HepG2 (cell line): ENCODE measurements at regions of chr1 and their contacts with region 1.

Region 1: DNA sequence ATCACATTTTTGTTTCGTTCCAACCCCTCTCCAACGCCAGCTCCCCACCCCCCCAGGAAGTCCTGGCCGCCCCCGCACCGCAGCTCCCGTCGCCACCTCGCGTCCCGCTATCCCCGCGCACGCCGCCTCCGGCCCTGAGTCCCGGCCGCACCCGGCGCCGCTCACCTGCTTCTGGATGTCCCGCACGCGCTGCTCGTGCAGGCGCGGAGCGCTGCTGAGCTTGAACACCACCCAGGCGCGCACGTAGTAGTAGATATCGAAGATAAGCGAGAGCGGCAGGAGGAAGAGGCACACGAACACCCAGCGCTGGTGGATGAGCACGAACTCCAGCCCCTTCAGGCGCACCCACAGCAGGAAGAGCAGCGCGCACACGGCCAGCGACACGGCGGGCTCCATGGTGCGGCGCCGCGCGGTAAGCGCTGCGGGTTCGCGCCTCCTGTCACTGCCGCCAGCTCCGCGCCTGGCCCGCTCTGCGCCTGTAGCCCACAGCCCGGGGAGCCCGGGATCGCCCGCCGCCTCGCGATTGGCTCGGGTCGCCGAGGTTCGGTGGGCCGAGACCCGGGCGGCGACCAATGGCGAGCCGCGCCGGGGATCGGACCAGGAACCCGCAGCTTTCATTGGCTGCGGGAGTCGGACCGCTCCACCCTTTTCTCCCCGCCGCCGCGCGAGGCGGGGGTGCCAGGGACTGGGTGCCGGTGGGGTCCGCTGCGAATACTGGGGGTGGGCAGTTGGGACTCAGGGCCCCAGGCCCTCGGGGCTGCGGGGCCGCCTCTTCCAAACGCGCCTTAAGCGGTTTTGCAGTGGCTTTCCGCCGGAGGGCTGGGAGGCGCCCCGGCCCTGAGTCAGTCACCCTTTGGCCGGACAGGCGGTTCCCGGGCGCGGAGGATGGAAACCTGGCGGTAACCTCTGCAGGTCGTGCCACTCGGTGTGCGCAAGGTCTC is at the start of gene DHCR24:
- DNase-seq: peak; percentile 77
- ATAC-seq: peak; percentile 81
- H3K4me3 ChIP-seq: peak within 1 kb of the TSS; percentile 93 to 99 (median 98)
- H3K27ac ChIP-seq: peak within 1 kb of the TSS; percentile 99
- H3K4me1 ChIP-seq: peaks cover 73% of the 10 kb centered on the region
- H3K27me3 ChIP-seq: no peaks in the 10 kb centered on the region; a peak in 1 of 5 replicates
- CTCF ChIP-seq: no peak
- EP300 ChIP-seq: peak; percentile 38 to 65; a peak in 1 of 4 replicates
- POLR2A ChIP-seq: peak; percentile 94 to 99
- RAD21 ChIP-seq: peak; percentile 17
- total RNA-seq, gene DHCR24: 250 and 448 TPM in 2 replicates

Region 2: GRCh38 chr1:54715493-54716298 is 171.3 kb before region 1 on chr1 and contains the start of gene TTC4:
- CTCF ChIA-PET with region 1: no interaction called
- POLR2A ChIA-PET with region 1: no interaction called
- in situ Hi-C with region 1: no loop called
- intact Hi-C with region 1: no loop called
- DNase-seq: peak; percentile 66
- ATAC-seq: peak; percentile 96
- H3K4me3 ChIP-seq: peak within 1 kb of the TSS; percentile 78 to 88 (median 85)
- H3K27ac ChIP-seq: peak within 1 kb of the TSS; percentile 50
- H3K4me1 ChIP-seq: peaks cover 37% of the 10 kb centered on the region
- H3K27me3 ChIP-seq: peaks cover 0 to 14% of the 10 kb centered on the region in 2 experiments; a peak in 2 of 5 replicates
- CTCF ChIP-seq: peak; percentile 47
- EP300 ChIP-seq: no peak; a peak in 1 of 4 replicates
- POLR2A ChIP-seq: peak; percentile 89 to 92
- RAD21 ChIP-seq: peak; percentile 64
- total RNA-seq, gene TTC4: 24.7 and 36.9 TPM in 2 replicates

Region 3: DNA sequence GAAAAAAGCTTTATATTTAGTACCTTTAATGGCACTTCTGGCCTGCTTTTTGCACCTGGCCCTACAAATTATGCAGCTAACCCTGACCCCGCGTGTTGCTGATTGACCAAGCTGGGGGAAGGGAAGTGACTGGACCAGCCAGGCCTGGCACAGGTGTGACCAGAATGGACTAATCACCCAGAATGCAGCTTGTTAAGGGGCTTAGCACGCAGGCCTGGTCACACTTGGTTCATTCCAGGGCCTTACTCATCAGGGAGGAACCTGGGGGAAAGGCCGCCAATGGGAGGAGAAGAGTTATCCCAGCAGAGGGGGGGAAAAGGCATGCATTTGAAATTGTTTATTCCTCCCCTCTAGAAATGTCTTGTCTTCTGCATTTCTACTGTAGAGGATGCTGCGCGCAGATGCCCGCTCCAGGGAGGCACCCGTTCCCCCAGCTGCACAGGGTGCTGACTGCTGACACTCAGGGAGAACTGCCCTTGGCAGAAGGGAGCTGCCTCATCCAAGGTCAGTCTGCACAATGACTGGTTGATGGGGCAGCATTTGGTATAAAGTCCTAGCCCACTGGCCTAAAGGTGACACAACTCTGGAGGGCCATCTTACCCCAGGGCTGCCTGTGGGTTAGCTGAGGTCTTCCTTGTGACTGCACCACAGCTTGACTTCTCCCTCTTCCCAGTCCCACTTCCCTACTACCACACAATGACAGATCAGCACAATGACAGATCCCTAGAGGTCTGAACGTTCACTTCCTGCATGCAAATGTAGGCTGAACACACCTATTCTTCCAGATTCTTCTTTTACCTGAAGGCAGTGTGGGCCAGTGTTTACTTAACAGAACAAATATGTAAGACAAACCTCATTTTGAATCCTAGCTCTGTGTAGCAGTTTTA is 29.0 kb before region 1 on chr1:
- CTCF ChIA-PET with region 1: no interaction called
- POLR2A ChIA-PET with region 1: interaction called, 85 read pairs
- in situ Hi-C with region 1: no loop called
- intact Hi-C with region 1: loop called (anchors 2 kb)
- DNase-seq: no peak
- ATAC-seq: no peak
- H3K4me3 ChIP-seq: no peak overlapping the region
- H3K27ac ChIP-seq: peak overlapping the region; percentile 19
- H3K4me1 ChIP-seq: peaks cover 73% of the 10 kb centered on the region
- H3K27me3 ChIP-seq: no peaks in the 10 kb centered on the region
- CTCF ChIP-seq: no peak
- EP300 ChIP-seq: no peak
- POLR2A ChIP-seq: peak; percentile 46 to 57; a peak in 3 of 4 replicates
- RAD21 ChIP-seq: no peak

Region 4: DNA sequence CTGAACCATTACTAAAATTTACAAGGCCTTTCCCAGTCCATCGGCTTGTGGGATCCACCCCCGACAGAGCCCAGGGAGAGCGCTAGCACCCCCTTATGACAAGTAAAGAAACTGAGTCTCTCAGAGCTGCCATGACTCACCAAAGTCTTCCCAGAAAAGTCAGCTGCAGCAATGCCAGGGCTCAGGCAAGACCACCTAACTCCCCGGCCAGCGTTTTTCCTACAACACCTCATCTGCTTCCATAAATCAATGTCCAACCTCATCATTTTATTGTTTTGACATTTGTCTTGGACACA is 15.0 kb before region 1 on chr1:
- CTCF ChIA-PET with region 1: interaction called, 3 read pairs
- POLR2A ChIA-PET with region 1: interaction called, 364 read pairs
- in situ Hi-C with region 1: no loop called
- intact Hi-C with region 1: no loop called
- DNase-seq: no peak
- ATAC-seq: no peak
- H3K4me3 ChIP-seq: no peak overlapping the region
- H3K27ac ChIP-seq: peak overlapping the region; percentile 90
- H3K4me1 ChIP-seq: peaks cover 97% of the 10 kb centered on the region
- H3K27me3 ChIP-seq: no peaks in the 10 kb centered on the region
- CTCF ChIP-seq: peak; percentile 33
- EP300 ChIP-seq: no peak
- POLR2A ChIP-seq: no peak
- RAD21 ChIP-seq: no peak

Region 5: DNA sequence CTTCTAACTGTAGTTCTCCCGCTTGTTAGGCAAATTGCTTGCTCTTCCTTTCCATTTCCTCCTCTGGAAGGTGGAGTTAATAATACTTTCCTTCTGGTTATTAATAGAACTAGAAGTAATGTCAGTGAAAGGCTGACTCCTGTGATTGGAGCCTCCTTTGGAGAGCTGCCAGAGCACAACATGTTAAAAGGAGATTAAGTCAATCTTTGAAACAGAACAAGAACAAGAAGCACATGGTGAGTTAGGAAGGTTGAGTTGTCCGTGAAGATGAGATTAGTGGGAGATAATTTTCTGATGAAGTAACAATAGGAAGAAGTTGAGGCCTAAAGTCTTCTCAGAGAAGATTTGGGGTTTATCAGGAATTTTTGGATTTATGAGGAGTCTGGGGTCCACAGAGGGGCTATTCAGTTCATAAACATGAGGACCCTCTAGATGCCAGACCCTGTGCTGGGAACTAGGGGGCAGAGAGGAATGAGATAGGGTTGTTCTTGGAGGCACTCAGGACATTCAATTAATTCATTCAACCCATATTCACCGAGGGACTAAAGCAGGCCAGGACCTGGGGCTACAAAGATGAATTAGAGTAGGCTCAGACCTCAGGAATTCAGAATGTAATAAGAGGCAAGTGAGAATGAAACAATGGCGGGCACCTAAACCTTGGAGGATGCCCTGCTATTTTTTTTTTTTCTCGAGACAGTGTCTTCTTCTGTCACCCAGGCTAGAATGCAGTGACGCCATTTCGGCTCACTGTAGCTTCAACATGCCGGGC is 40.7 kb after region 1 on chr1:
- CTCF ChIA-PET with region 1: no interaction called
- POLR2A ChIA-PET with region 1: interaction called, 17 read pairs
- in situ Hi-C with region 1: no loop called
- intact Hi-C with region 1: no loop called
- DNase-seq: no peak
- ATAC-seq: no peak
- H3K4me3 ChIP-seq: no peak overlapping the region
- H3K27ac ChIP-seq: no peak overlapping the region
- H3K4me1 ChIP-seq: peaks cover 50% of the 10 kb centered on the region
- H3K27me3 ChIP-seq: no peaks in the 10 kb centered on the region
- CTCF ChIP-seq: no peak
- EP300 ChIP-seq: no peak
- POLR2A ChIP-seq: no peak
- RAD21 ChIP-seq: no peak

Region 6: DNA sequence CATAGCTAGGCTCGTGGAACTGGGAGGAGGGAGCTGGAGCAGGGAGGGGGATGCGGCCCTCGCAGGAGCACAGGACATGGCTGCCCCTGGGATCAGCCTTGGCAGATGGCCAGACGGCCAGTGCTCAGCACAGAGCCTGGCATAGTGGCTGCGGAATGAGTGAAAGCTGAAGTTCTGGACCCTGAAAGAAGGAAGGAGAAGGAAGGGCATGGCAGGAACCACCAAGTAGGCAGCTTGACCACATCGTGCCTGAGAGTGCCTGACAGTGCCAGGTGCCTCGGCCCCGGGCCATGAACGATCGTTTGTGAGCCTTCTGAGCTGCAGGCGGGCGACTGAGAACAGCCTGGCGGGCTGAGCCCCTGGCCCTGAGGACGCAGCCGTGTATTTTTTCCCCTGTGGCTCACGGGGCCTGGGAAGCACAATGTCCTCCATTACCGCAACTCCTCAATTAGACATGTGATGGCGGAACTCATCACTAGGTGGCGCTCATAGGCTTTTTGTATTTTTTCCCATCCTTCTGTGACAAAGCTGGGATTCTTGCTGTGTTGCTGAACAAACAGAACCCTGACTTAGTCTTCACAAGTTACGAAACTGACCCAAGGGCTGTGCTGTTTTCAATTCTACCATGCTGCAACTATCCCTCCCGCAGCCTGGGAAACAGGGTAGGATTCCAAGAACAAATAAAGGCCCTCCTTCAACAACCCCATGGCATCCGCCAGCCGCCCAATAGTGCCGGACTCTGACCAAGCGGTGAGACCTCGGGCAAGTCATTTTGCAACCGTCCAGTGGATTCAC is 63.6 kb after region 1 on chr1:
- CTCF ChIA-PET with region 1: interaction called, 4 read pairs
- POLR2A ChIA-PET with region 1: interaction called, 36 read pairs
- in situ Hi-C with region 1: no loop called
- intact Hi-C with region 1: loop called (anchors 1 kb)
- DNase-seq: peak; percentile 84
- ATAC-seq: peak; percentile 83
- H3K4me3 ChIP-seq: peak overlapping the region; percentile 33 to 70 (median 58); a peak in 5 of 6 replicates
- H3K27ac ChIP-seq: peak overlapping the region; percentile 13
- H3K4me1 ChIP-seq: peaks cover 43% of the 10 kb centered on the region
- H3K27me3 ChIP-seq: no peaks in the 10 kb centered on the region; a peak in 1 of 5 replicates
- CTCF ChIP-seq: peak; percentile 91
- EP300 ChIP-seq: no peak
- POLR2A ChIP-seq: no peak
- RAD21 ChIP-seq: peak; percentile 68

Region 7: GRCh38 chr1:55039342-55040082 is 152.5 kb after region 1 on chr1 and contains the start of gene PCSK9:
- CTCF ChIA-PET with region 1: no interaction called
- POLR2A ChIA-PET with region 1: no interaction called
- in situ Hi-C with region 1: no loop called
- intact Hi-C with region 1: no loop called
- DNase-seq: peak; percentile 60
- ATAC-seq: peak; percentile 87
- H3K4me3 ChIP-seq: peak within 1 kb of the TSS; percentile 69 to 87 (median 76)
- H3K27ac ChIP-seq: peak within 1 kb of the TSS; percentile 82
- H3K4me1 ChIP-seq: peaks cover 80% of the 10 kb centered on the region
- H3K27me3 ChIP-seq: no peaks in the 10 kb centered on the region; a peak in 1 of 5 replicates
- CTCF ChIP-seq: peak; percentile 17; the same call in 1 of the 2 replicates
- EP300 ChIP-seq: peak; percentile 12 to 52; a peak in 2 of 4 replicates
- POLR2A ChIP-seq: peak; percentile 91 to 98
- RAD21 ChIP-seq: no peak; the same call in 1 of the 2 replicates
- total RNA-seq, gene PCSK9: 31.2 and 80.5 TPM in 2 replicates